ENCODE measurements at regions of chr5 and their contacts with region 1.

Region 1: DNA sequence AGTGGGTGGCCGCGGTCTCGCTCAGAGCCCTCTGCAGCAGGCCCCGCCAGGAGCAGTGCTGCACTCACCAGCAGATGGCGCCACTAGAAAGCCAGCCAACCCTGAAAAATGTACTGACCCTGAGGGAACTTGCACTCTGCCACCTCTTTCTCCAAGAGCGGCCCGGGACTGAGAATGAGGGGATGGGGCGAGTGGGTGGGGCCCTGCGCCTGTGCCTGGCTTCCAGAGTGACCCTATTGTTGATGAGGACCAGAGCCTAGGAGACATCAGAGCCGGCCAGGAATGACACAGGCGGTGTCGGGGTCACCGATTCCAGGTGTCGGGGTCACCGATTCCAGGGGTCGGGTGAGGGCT is 2.9 kb upstream of the IL17B start:
- DNase-seq: peak; percentile 78 to 91 (median 89)
- H3K4me3 ChIP-seq: peak overlapping the region; percentile 13
- H3K27ac ChIP-seq: peak overlapping the region in 1 of 2 donors; percentile 58
- H3K4me1 ChIP-seq: peaks cover 48% of the 10 kb centered on the region
- H3K27me3 ChIP-seq: no peaks in the 10 kb centered on the region
- CTCF ChIP-seq: peak; percentile 70 to 94 (median 91)
- EP300 ChIP-seq: no peak
- POLR2A ChIP-seq: no peak

Region 2: DNA sequence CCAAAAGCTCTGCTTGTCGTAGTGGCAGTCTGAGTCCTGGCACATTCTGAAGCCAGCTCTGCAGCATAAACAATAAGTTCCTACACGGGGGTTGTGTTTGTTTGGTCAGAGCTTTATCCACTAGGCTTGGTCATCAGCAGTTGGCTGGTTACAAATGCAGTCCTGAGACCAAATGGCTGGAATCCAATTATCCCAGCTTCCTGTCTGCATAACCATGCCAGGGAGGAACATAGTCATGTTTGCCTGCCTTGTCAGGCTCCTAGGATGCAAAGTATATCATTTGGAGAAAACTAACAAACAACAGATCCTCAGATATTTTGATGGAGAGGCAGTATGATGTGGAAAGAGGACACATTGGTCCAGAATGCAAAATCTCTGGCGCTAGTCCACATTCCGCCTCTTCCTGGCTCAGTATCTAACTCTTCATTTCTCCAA is 912.4 kb before region 1 on chr5:
- intact Hi-C with region 1: no loop called
- DNase-seq: no peak
- H3K4me3 ChIP-seq: no peak overlapping the region
- H3K27ac ChIP-seq: no peak overlapping the region
- H3K4me1 ChIP-seq: no peaks in the 10 kb centered on the region
- H3K27me3 ChIP-seq: no peaks in the 10 kb centered on the region
- CTCF ChIP-seq: no peak
- EP300 ChIP-seq: no peak
- POLR2A ChIP-seq: no peak

Region 3: GRCh38 chr5:149422366-149423048 is 40.5 kb after region 1 on chr5:
- intact Hi-C with region 1: loop called in 1 of 4 experiments (anchors 5 kb)
- DNase-seq: peak; percentile 89 to 96 (median 90)
- H3K4me3 ChIP-seq: no peak overlapping the region
- H3K27ac ChIP-seq: peak overlapping the region in 1 of 2 donors; percentile 79
- H3K4me1 ChIP-seq: peaks cover 47% of the 10 kb centered on the region
- H3K27me3 ChIP-seq: no peaks in the 10 kb centered on the region
- CTCF ChIP-seq: no peak
- EP300 ChIP-seq: no peak
- POLR2A ChIP-seq: no peak

Region 4: GRCh38 chr5:149434162-149435014 is 52.4 kb after region 1 on chr5:
- intact Hi-C with region 1: loop called in 3 of 4 experiments (anchors 2 to 5 kb)
- DNase-seq: peak in 4 of 5 donors; percentile 60 to 77 (median 66)
- H3K4me3 ChIP-seq: no peak overlapping the region
- H3K27ac ChIP-seq: no peak overlapping the region
- H3K4me1 ChIP-seq: peaks cover 7% of the 10 kb centered on the region
- H3K27me3 ChIP-seq: no peaks in the 10 kb centered on the region
- CTCF ChIP-seq: peak; percentile 31 to 68 (median 61)
- EP300 ChIP-seq: no peak
- POLR2A ChIP-seq: no peak

Region 5: DNA sequence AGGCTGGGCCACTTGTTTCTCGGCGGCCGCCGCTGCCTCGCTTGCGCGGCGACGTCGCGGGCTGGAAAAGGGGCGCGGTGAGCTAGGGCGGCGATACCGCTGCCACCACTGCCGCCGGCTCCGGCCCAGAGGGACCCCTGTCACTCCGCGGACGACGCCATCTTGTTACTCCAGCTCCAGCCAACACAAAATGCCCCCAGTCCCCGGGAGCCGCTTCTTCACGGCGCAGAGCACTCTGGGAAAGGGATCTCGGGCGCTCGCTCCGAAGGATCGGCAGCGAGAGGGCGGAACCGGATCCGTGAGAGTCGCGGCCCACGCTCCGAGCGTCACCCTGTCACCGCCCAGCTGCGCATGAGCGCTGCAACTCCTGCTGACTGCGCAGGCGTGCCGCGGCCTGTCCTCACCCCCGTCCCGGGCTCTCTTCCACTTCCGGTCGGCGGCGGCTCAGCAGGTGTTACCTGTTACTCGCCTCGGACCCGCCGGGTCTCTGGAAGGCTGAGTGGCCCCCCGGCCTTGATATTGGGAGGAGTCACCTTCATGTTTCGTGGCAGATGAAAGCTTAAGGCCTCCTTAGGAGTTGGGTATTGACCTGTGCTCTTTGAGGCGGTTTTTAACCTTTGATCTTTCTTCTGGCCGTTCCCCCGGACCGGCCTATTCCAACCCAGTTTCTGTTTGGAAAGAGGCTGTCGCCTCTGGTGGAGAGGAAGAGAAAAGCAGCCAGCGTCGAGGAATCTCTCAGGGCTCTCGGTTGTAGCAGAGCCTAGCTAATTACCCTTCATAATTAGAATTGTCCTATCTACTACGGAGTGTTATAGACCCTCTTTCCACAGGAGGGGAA is 169.5 kb after region 1 on chr5 and contains the start of gene CSNK1A1:
- intact Hi-C with region 1: loop called in 1 of 4 experiments (anchors 5 kb)
- DNase-seq: peak; percentile 99
- H3K4me3 ChIP-seq: peak within 1 kb of the TSS; percentile 87
- H3K27ac ChIP-seq: peak within 1 kb of the TSS; percentile 89 to 93
- H3K4me1 ChIP-seq: peaks cover 10% of the 10 kb centered on the region
- H3K27me3 ChIP-seq: no peaks in the 10 kb centered on the region
- CTCF ChIP-seq: peak; percentile 82 to 96 (median 96)
- EP300 ChIP-seq: peak; percentile 45
- POLR2A ChIP-seq: peak; percentile 94
- total RNA-seq, gene CSNK1A1: 96.2 to 233 (median 159) TPM

Measured in ovary (tissue), 10 donors.